Colonic mucosa (tissue), 4 donors: ENCODE measurements at regions of chr6 and their contacts with region 1.

Region 1: GRCh38 chr6:134111062-134111677 is 58.7 kb upstream of the SLC2A12 start:
- DNase-seq: peak; percentile 43
- H3K4me3 ChIP-seq: no peak overlapping the region
- H3K27ac ChIP-seq: no peak overlapping the region
- H3K4me1 ChIP-seq: no peaks in the 10 kb centered on the region
- H3K27me3 ChIP-seq: no peaks in the 10 kb centered on the region
- CTCF ChIP-seq: peak; percentile 86

Region 2: DNA sequence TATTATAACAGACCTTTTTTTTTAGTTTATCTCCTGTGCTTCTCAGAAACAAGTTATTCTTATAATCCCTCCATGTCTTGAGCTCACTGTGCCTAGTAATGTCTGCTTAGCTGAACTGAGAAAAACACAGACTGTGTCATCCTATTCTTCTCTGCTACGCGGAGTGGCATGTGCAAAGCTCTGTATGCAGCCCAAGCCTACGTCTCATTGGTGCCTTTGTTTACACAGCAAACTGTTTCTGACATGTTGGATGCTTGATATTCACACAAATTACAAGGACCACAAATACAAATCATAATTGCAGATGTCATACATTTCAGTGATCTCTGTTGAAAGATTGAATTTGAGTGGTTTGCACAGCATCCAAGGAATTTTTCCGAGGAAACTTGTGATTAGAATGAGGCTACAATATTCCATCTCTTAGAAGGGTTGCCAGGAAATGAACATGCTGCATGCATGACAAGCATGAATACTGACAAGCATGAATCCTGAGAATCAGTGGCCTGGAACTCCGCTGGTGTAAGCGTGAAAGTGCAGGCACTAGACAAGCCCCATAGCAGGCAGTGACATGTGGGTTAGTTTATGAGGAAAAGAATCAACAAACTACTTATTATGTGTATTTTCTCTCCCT is 335.2 kb after region 1 on chr6:
- intact Hi-C with region 1: no loop called
- DNase-seq: no peak
- H3K4me3 ChIP-seq: no peak overlapping the region
- H3K27ac ChIP-seq: no peak overlapping the region
- H3K4me1 ChIP-seq: no peaks in the 10 kb centered on the region
- H3K27me3 ChIP-seq: no peaks in the 10 kb centered on the region
- CTCF ChIP-seq: no peak

Region 3: GRCh38 chr6:134741200-134741536 is 630.0 kb after region 1 on chr6:
- intact Hi-C with region 1: no loop called
- DNase-seq: no peak
- H3K4me3 ChIP-seq: no peak overlapping the region
- H3K27ac ChIP-seq: no peak overlapping the region
- H3K4me1 ChIP-seq: no peaks in the 10 kb centered on the region
- H3K27me3 ChIP-seq: no peaks in the 10 kb centered on the region
- CTCF ChIP-seq: no peak

Region 4: GRCh38 chr6:134943522-134944111 is 832.4 kb after region 1 on chr6:
- intact Hi-C with region 1: loop called (anchors 5 kb)
- DNase-seq: no peak
- H3K4me3 ChIP-seq: no peak overlapping the region
- H3K27ac ChIP-seq: no peak overlapping the region
- H3K4me1 ChIP-seq: no peaks in the 10 kb centered on the region
- H3K27me3 ChIP-seq: no peaks in the 10 kb centered on the region
- CTCF ChIP-seq: no peak